PC-3 (cell line): ENCODE measurements at regions of chr18 and their contacts with region 1.

Region 1: GRCh38 chr18:12990967-12991838 is at the start of gene CEP192:
- DNase-seq: peak; percentile 98
- ATAC-seq: peak; percentile 88
- H3K4me3 ChIP-seq: peak within 1 kb of the TSS; percentile 94
- H3K27ac ChIP-seq: peak within 1 kb of the TSS; percentile 82
- H3K4me1 ChIP-seq: peaks cover 22% of the 10 kb centered on the region
- H3K27me3 ChIP-seq: no peaks in the 10 kb centered on the region
- CTCF ChIP-seq: peak; percentile 18; the same call in 1 of the 2 replicates
- total RNA-seq, gene CEP192: 32.6 and 34.4 TPM in 2 replicates

Region 2: GRCh38 chr18:12947355-12948041 is 43.7 kb before region 1 on chr18 and contains the start of gene SEH1L:
- CTCF ChIA-PET with region 1: no interaction called
- POLR2A ChIA-PET with region 1: no interaction called
- intact Hi-C with region 1: loop called (anchors 2 kb)
- DNase-seq: peak; percentile 95
- ATAC-seq: peak; percentile 88
- H3K4me3 ChIP-seq: peak within 1 kb of the TSS; percentile 90
- H3K27ac ChIP-seq: peak within 1 kb of the TSS; percentile 96
- H3K4me1 ChIP-seq: peaks cover 23% of the 10 kb centered on the region
- H3K27me3 ChIP-seq: no peaks in the 10 kb centered on the region
- CTCF ChIP-seq: no peak
- total RNA-seq, gene SEH1L: 61.2 TPM in 2 replicates

Region 3: DNA sequence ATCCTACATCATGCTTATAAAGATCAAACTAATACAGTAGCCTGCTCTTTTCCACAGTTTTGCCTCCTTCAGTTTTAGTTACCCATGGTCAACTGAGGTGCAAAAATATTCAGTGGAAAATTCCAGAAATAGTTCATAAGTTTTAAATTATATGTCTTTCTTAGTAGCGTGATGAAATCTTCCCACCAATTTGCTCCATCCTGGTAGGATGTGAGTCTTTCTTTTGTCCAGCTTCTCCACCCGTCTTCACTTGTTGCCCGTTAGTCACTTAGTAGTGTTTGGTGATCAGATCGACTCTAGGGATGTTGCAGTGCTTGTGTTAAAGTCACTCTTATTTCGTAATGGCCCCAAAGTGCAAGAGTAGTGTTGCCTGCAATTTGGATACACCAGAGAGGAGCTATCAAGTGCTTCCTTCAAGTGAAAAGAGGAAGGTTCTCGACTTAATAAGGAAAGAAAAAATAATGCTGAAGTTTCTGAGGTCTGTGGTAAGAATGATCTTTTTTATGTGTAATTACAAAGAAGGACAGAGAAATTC is 56.9 kb after region 1 on chr18:
- CTCF ChIA-PET with region 1: no interaction called
- POLR2A ChIA-PET with region 1: interaction called, 11 read pairs
- intact Hi-C with region 1: no loop called
- DNase-seq: no peak
- ATAC-seq: no peak
- H3K4me3 ChIP-seq: no peak overlapping the region
- H3K27ac ChIP-seq: no peak overlapping the region
- H3K4me1 ChIP-seq: peaks cover 4% of the 10 kb centered on the region; the same call in 1 of the 2 replicates
- H3K27me3 ChIP-seq: no peaks in the 10 kb centered on the region
- CTCF ChIP-seq: no peak

Region 4: DNA sequence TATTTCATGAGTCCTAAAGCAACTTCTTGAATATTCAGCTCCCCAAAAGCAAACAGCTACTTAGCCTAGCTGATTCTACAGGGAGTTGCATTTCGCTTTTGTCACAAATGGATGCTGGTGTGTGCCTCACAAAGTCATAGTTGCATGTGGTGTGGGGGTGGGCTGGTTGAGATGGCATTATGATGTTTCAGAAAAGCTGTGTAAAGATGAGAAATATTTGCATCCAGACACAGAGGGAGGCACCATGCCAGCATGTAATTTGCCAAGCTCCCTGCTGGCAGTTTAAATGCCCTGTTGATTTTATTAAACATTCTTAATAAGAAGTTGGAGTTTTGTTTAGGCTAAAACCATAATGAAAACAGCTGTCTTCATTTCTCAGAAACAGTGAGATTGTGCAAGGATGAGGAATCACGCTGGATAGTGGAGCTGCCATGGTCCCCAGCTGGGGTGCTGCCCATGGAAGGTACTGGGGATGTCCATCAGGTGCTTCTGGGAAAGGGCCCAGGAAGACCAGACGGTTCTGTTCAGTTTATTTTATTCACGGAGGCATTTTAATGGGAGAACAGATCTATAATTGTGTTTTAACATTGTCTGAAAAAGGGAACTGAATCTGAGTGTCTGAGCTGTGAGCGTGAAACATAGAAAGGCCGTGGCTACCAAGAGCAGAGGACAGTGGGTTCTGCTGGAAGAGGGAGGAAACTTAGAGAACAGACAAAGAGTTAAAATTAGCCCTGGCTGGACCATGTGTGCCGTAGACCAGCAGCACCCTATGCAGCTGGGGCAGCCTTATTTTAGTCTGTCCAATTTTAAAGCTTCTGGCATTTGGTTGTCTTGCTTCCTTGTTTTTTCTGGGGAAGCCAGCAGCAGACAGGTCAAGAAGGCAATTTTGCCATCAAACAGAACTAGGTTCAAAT is 558.0 kb after region 1 on chr18:
- CTCF ChIA-PET with region 1: no interaction called
- POLR2A ChIA-PET with region 1: no interaction called
- intact Hi-C with region 1: no loop called
- DNase-seq: no peak
- ATAC-seq: no peak
- H3K4me3 ChIP-seq: no peak overlapping the region
- H3K27ac ChIP-seq: no peak overlapping the region
- H3K4me1 ChIP-seq: no peaks in the 10 kb centered on the region
- H3K27me3 ChIP-seq: peaks cover 92% of the 10 kb centered on the region
- CTCF ChIP-seq: no peak